PC-3 (cell line): ENCODE measurements at regions of chr3 and their contacts with region 1.

Region 1: DNA sequence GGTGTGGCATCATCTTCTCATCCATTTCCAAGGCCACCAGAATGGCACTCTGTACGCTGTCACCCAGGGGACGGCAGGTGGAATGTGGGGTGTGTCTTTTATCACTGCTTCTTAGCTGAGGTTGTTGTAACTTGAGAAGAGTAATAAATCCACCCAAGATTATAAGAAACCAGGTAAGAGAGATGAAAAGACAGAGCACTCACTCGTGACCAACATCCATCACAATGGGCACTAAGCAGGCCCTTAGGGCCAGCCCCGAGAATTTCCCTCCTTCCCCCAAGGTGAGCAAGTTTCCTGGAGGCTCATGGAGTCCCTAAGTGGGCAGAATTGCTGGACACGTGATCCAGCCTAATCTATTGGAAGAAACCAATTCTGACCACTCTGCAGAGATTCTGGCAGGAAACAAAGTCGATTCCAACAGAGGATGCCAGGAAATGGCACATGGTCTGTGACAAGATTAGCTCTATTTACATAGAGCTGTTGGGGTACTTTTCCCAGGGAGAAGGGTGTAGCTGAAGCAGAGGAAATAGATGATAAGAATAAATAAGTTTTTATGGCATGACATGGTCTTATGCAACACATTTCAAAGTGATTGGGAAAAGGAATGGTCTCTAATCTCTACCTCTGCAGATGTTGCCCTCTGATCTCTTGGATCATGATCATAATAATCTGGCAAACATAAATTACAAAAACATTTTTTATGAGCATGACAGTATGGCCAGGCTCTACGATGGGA is 22.5 kb downstream of the SLC6A20 start:
- DNase-seq: peak; percentile 11
- ATAC-seq: no peak; the same call in 1 of the 2 replicates
- H3K4me3 ChIP-seq: no peak overlapping the region
- H3K27ac ChIP-seq: no peak overlapping the region
- H3K4me1 ChIP-seq: no peaks in the 10 kb centered on the region
- H3K27me3 ChIP-seq: no peaks in the 10 kb centered on the region
- CTCF ChIP-seq: no peak

Region 2: DNA sequence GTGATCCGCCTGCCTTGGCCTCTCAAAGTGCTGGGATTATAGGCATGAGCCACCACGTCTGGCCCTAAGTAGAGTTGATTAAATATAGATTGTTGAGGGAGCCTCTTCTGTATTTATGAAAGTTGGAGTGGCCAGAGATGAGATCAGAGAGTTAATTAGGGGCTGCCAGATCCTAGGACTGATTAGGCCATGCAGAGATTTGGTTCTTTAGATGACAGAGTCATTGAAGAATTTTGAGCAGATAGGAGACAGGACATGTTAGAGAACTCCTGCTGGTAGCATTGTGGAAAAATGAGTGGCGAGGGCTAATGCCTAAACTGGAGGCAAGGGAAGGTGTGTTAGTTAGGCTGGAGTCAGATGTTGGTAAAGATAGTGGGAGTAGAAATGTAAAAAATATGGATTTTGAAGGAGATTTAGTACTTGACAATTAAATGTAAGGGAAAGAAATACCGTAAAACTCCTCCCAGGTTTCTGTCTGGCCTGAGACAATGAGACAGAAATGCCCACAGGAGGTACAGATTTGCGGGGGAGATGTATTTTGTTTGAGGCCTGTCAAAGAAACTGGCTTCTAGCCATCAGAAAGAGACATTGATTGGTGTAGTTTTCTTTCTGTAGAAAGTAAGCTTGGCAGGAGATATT is 61.3 kb before region 1 on chr3:
- CTCF ChIA-PET with region 1: no interaction called
- POLR2A ChIA-PET with region 1: no interaction called
- intact Hi-C with region 1: no loop called
- DNase-seq: no peak
- ATAC-seq: no peak
- H3K4me3 ChIP-seq: no peak overlapping the region
- H3K27ac ChIP-seq: no peak overlapping the region
- H3K4me1 ChIP-seq: no peaks in the 10 kb centered on the region
- H3K27me3 ChIP-seq: no peaks in the 10 kb centered on the region
- CTCF ChIP-seq: no peak

Region 3: DNA sequence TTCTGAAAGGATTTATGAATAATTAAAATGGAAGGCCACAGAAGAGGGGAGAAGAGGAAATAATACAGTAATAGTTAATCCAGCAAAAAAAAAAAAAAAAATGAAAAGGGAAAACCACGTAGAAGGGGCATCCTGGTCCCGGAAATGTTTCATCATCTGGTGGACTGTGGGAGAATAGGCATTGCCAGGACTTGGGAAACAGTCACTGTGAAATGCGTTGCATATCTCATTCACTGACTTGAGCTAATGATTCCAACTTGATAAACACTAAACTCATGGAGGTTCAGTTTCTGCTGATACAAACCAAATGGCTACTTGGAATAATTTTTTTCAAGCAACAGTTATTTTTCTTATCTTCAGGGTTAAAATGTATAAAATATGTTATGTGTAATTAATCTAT is 250.2 kb after region 1 on chr3:
- CTCF ChIA-PET with region 1: no interaction called
- POLR2A ChIA-PET with region 1: interaction called, 14 read pairs
- intact Hi-C with region 1: no loop called
- DNase-seq: no peak
- ATAC-seq: no peak
- H3K4me3 ChIP-seq: no peak overlapping the region
- H3K27ac ChIP-seq: no peak overlapping the region
- H3K4me1 ChIP-seq: no peaks in the 10 kb centered on the region
- H3K27me3 ChIP-seq: no peaks in the 10 kb centered on the region
- CTCF ChIP-seq: no peak